ENCODE measurements at regions of chr11 and their contacts with region 1.

Region 1: GRCh38 chr11:19879307-19880087 is 166.9 kb downstream of the NAV2 start:
- DNase-seq: no peak
- H3K4me3 ChIP-seq: no peak overlapping the region
- CTCF ChIP-seq: no peak

Region 2: DNA sequence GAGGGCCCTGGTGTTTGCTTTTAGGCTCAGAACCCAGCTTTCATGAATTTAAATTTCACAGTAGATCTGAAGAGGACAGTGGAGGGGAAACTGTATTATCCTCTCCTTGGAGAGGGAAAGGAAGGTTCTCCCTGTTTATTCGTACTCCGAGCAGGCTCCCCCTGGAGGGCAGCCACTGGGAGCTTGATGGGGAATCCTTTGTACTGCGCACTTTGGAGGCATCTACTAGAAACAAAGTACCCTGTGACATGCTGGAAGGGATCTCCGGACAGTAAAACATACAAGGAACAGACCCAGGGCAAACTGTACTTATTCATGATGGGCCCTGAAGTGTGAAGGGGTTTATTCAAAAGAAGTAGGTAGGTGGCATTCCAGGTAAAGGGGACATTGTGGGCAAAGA is 139.6 kb before region 1 on chr11:
- CTCF ChIA-PET with region 1: no interaction called
- POLR2A ChIA-PET with region 1: no interaction called
- DNase-seq: no peak
- H3K4me3 ChIP-seq: no peak overlapping the region
- CTCF ChIP-seq: peak; percentile 36

Region 3: GRCh38 chr11:19868281-19868821 is 11.1 kb before region 1 on chr11:
- CTCF ChIA-PET with region 1: interaction called, 12 read pairs
- POLR2A ChIA-PET with region 1: no interaction called
- DNase-seq: peak; percentile 59
- H3K4me3 ChIP-seq: no peak overlapping the region
- CTCF ChIP-seq: no peak

Region 4: DNA sequence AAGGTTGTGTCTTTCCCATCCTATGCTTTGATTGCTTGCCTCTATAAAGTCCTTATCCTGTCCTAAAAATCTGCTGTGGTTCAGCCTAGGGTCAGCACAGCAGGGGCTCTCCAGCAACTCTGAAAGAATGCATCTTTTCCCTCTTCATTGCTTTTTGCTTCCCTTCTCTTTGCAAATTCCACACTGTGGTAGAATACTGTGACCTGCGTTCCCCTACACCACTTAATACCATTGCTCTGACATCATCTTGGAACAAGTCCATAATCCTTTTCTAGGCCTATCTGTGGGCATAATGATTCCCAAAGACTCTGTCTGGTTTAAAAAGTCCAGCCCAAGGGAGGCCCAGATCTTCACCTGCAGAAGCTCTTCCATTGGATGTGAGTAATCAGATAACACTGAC is 10.8 kb after region 1 on chr11:
- CTCF ChIA-PET with region 1: interaction called, 21 read pairs
- POLR2A ChIA-PET with region 1: no interaction called
- DNase-seq: peak; percentile 79
- H3K4me3 ChIP-seq: no peak overlapping the region
- CTCF ChIP-seq: no peak

Measured in AG04449 (cell line).